PC-9 (cell line): ENCODE measurements at regions of chr4 and their contacts with region 1.

Region 1: GRCh38 chr4:71184195-71184781 is 154.5 kb upstream of the SLC4A4 start:
- DNase-seq: peak in 1 of 2 experiments; percentile 15
- H3K4me3 ChIP-seq: no peak overlapping the region
- H3K27ac ChIP-seq: no peak overlapping the region
- H3K4me1 ChIP-seq: no peaks in the 10 kb centered on the region
- H3K27me3 ChIP-seq: peaks cover 16% of the 10 kb centered on the region; the same call in 1 of the 2 replicates
- CTCF ChIP-seq: peak; percentile 61

Region 2: GRCh38 chr4:70601422-70602039 is 582.8 kb before region 1 on chr4:
- CTCF ChIA-PET with region 1: no interaction called
- POLR2A ChIA-PET with region 1: no interaction called
- intact Hi-C with region 1: loop called (anchors 10 kb)
- DNase-seq: peak; percentile 45 to 46
- H3K4me3 ChIP-seq: no peak overlapping the region
- H3K27ac ChIP-seq: no peak overlapping the region
- H3K4me1 ChIP-seq: no peaks in the 10 kb centered on the region
- H3K27me3 ChIP-seq: no peaks in the 10 kb centered on the region
- CTCF ChIP-seq: peak; percentile 72

Region 3: DNA sequence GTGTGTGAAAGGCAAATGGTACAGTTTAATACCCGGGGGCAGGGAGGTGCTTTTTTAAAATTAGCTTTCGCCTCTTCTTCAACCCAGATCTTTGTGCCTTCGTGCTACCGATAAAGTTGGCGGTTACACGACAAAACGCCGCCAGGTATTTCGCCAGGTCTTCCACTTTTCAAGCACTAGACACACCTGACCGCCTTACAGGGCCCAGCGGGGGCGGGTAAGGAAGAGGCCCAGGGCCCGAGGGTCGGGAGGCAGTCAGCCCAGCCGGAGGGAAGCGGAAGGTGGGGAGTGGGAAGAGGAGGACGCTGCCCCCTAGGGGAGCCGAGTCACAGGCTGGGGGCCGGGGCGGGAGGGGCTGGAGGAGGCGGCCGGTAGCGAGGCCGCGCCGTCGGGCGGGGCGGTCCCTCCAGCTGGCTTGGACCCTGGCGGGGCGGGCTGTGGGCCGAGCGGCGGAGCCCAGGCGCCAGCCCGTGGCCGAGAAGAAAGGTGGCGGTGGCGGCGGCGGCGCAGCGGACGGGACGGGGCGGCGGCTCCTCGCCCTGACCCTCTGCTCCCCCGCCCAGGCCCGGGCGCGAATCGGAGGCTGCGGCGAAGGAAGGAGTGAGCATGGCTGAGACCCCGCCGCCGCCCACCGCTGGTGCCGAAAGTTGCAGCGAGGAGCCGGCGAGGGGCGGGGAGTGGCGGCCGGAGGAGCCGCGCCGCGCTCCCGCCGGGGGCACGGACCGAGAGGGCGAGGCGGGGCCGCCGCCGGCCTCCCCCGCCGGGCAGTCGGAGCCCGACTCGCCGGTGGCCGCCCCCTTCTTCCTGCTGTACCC is 479.8 kb before region 1 on chr4:
- CTCF ChIA-PET with region 1: no interaction called
- POLR2A ChIA-PET with region 1: no interaction called
- intact Hi-C with region 1: no loop called
- DNase-seq: peak; percentile 42 to 73
- H3K4me3 ChIP-seq: peak overlapping the region; percentile 87
- H3K27ac ChIP-seq: peak overlapping the region; percentile 72
- H3K4me1 ChIP-seq: peaks cover 24% of the 10 kb centered on the region
- H3K27me3 ChIP-seq: no peaks in the 10 kb centered on the region
- CTCF ChIP-seq: peak; percentile 44; the same call in 1 of the 2 replicates

Region 4: DNA sequence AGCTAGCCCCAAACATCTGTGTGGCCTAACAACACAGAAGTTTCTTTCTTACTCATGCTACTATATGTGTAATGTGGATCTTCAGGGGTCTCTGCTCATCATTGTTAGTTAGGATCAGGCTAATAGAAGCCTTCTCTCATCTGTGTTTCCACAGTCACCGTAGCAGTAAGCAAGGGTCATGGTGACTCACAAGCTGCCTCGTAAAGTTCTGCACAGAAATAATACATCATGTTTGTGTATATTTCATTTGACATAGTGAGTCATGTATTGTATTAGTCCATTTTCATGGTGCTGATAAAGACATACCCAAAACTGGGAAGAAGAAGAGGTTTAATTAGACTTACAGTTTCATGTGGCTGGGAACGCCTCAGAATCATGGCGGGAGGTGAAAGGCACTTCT is 193.3 kb after region 1 on chr4:
- CTCF ChIA-PET with region 1: no interaction called
- POLR2A ChIA-PET with region 1: no interaction called
- intact Hi-C with region 1: no loop called
- DNase-seq: no peak
- H3K4me3 ChIP-seq: no peak overlapping the region
- H3K27ac ChIP-seq: no peak overlapping the region
- H3K4me1 ChIP-seq: no peaks in the 10 kb centered on the region
- H3K27me3 ChIP-seq: no peaks in the 10 kb centered on the region
- CTCF ChIP-seq: no peak